ENCODE measurements at regions of chr7 and their contacts with region 1.

Region 1: DNA sequence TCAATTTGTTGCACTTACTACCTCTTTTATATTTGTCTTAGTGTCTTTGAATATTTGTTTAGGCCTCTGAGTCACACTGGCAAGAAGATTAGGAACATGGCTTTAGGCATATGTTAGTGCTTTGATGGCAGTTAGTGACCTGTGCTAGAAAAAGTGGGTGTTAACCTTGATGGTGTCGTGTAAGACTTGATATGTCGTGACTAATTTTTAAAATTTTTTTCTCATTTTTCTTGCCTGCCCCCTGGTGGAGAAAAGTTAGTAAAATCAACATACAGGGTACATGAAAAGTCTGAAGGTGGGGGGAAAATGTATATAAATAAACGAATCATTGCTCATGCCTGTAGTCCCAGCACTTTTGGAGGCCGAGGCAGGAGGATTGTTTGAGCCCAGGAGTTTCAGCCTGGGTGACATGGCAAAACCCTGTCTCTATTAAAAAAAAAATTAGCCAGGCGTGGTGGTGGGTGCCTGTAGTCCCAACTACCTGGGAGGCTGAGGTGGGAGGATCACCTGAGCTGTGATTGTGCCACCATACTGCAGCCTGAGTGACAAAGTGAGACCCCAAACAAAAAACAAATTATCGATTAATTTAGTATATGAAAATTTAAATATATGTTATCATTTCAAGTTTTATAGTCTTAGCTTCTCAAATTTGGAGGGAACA is 44.6 kb downstream of the TAX1BP1 start:
- DNase-seq: peak; percentile 59
- ATAC-seq: peak; percentile 28
- H3K4me3 ChIP-seq: no peak overlapping the region
- H3K4me3 Mint-ChIP-seq: no peak overlapping the region
- H3K27ac ChIP-seq: no peak overlapping the region
- H3K27ac Mint-ChIP-seq: no peak overlapping the region
- H3K4me1 ChIP-seq: no peaks in the 10 kb centered on the region
- H3K4me1 Mint-ChIP-seq: no peaks in the 10 kb centered on the region
- H3K27me3 ChIP-seq: no peaks in the 10 kb centered on the region
- H3K27me3 Mint-ChIP-seq: no peaks in the 10 kb centered on the region
- CTCF ChIP-seq: peak; percentile 80

Region 2: DNA sequence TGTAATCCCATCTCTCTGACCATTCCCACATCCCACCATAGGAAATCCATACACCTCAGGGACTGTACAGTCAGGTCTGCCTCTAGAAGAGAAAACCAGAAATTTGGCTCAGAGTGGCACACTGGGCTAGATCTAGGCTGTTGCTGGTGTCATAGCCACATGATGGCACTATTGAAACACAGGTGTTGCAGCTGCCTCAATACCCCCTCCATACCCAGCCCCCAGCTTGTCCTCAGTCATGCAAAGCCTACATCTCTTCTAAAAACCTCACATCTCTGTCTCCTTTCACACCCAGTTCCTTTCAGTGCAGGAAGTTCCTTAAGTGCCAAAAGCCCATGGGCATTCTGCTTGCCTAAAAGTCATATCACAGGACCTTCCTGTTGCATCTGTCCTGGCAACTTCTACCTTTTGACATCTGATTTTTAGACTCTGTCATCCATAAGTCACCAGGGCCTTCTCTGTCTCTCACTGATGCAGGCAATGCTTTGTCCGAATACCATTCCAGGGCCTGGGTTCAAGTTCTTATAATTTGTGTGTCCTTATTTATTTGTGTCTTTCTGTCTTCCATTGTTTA is 94.8 kb before region 1 on chr7:
- CTCF ChIA-PET with region 1: interaction called, 11 read pairs
- POLR2A ChIA-PET with region 1: no interaction called
- intact Hi-C with region 1: loop called (anchors 2 kb)
- DNase-seq: peak; percentile 39
- ATAC-seq: peak; percentile 51
- H3K4me3 ChIP-seq: no peak overlapping the region
- H3K4me3 Mint-ChIP-seq: no peak overlapping the region
- H3K27ac ChIP-seq: no peak overlapping the region
- H3K27ac Mint-ChIP-seq: no peak overlapping the region
- H3K4me1 ChIP-seq: no peaks in the 10 kb centered on the region
- H3K4me1 Mint-ChIP-seq: no peaks in the 10 kb centered on the region
- H3K27me3 ChIP-seq: no peaks in the 10 kb centered on the region
- H3K27me3 Mint-ChIP-seq: peaks cover 8% of the 10 kb centered on the region
- CTCF ChIP-seq: peak; percentile 30

Region 3: DNA sequence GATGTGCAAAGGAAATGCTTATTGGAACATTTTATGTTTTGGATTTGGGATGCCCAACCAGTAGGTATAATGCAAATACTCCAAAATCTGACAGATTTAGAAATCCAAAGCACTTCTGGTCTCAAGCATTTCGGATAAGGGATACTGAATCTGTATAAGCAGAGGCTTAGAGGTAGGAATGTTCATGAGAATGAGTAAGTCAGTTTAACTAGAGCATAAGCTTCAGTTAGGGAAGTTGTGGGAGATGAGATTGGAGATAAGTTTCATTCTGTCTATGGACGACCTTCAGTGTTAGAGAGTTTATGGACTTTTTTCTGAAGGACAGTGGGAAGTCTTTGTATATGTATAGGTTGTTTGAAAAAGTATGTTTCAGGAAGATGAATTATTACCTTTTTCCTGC is 34.2 kb before region 1 on chr7:
- CTCF ChIA-PET with region 1: no interaction called
- POLR2A ChIA-PET with region 1: no interaction called
- intact Hi-C with region 1: no loop called
- DNase-seq: no peak
- ATAC-seq: no peak
- H3K4me3 ChIP-seq: no peak overlapping the region
- H3K4me3 Mint-ChIP-seq: no peak overlapping the region
- H3K27ac ChIP-seq: no peak overlapping the region
- H3K27ac Mint-ChIP-seq: no peak overlapping the region
- H3K4me1 ChIP-seq: no peaks in the 10 kb centered on the region
- H3K4me1 Mint-ChIP-seq: peaks cover 12% of the 10 kb centered on the region
- H3K27me3 ChIP-seq: no peaks in the 10 kb centered on the region
- H3K27me3 Mint-ChIP-seq: no peaks in the 10 kb centered on the region
- CTCF ChIP-seq: no peak

Region 4: GRCh38 chr7:28020302-28020940 is 235.9 kb after region 1 on chr7:
- CTCF ChIA-PET with region 1: interaction called, 10 read pairs
- POLR2A ChIA-PET with region 1: no interaction called
- intact Hi-C with region 1: loop called (anchors 5 kb)
- DNase-seq: peak; percentile 62
- ATAC-seq: peak; percentile 69
- H3K4me3 ChIP-seq: no peak overlapping the region
- H3K4me3 Mint-ChIP-seq: no peak overlapping the region
- H3K27ac ChIP-seq: no peak overlapping the region
- H3K27ac Mint-ChIP-seq: no peak overlapping the region
- H3K4me1 ChIP-seq: no peaks in the 10 kb centered on the region
- H3K4me1 Mint-ChIP-seq: peaks cover 26% of the 10 kb centered on the region
- H3K27me3 ChIP-seq: no peaks in the 10 kb centered on the region
- H3K27me3 Mint-ChIP-seq: no peaks in the 10 kb centered on the region
- CTCF ChIP-seq: peak; percentile 83